ENCODE measurements at regions of chr6 and their contacts with region 1.

Region 1: DNA sequence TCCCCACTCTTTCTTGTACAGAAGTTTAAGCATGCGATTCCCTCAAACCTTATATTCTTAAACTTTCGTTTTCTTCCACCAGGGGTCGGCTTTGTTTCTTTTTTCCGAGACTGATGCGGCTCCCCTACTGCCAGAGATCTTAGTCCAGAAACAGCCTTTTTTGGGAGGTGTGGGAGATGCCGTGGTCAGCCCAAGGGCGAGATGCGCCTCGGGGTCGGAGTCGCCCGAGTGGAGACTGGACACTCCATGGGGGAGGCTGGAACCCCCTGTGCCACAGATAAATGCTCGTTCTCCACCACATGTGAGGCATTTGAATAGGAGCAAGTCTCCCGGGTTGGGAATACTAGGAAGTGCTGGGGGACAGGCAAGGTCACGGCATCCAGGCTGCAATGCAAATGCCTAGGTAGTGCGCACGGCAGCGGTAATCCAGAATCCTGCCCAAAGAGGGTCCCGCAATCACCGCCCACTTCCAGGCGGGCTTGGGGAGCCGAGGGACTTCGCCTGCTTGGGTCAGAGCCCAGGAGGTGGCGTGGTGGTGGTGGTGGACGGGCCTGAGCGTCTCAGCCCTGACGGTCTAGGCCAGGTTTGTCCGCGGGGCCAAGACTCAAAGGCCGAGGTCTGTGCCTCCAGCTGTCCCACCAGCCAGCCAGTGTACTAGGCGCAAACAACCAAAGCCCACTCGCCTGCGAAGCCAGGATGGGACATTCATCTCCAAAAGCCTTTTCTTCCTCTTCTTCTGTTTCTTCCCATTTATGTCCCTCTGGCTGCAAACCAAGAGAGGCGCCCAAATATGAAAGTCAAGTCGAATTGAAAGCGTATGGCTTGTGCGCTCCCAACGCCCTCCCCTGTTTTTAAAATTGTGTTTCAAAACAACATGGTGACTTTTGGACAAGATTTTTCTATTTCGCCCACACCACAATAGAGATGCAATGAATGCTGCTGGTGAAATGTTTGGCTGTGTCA is 39.3 kb upstream of the OSTM1 start:
- DNase-seq: peak; percentile 67
- H3K4me3 Mint-ChIP-seq: peak overlapping the region; percentile 73
- H3K27ac Mint-ChIP-seq: no peak overlapping the region
- H3K4me1 Mint-ChIP-seq: peaks cover 21% of the 10 kb centered on the region
- H3K27me3 Mint-ChIP-seq: peaks cover 11% of the 10 kb centered on the region
- CTCF ChIP-seq: peak; percentile 52

Region 2: GRCh38 chr6:108260809-108261569 is 147.2 kb after region 1 on chr6 and contains the start of gene SNX3:
- CTCF ChIA-PET with region 1: interaction called, 7 read pairs
- POLR2A ChIA-PET with region 1: interaction called, 3 read pairs
- intact Hi-C with region 1: loop called (anchors 2 kb)
- DNase-seq: peak; percentile 96
- H3K4me3 Mint-ChIP-seq: peak within 1 kb of the TSS; percentile 93
- H3K27ac Mint-ChIP-seq: peak within 1 kb of the TSS; percentile 89
- H3K4me1 Mint-ChIP-seq: peaks cover 7% of the 10 kb centered on the region
- H3K27me3 Mint-ChIP-seq: no peaks in the 10 kb centered on the region
- CTCF ChIP-seq: no peak
- total RNA-seq, gene SNX3: 114 and 138 TPM in 2 replicates

Region 3: GRCh38 chr6:108497883-108498282 is 384.0 kb after region 1 on chr6:
- CTCF ChIA-PET with region 1: interaction called, 43 read pairs
- POLR2A ChIA-PET with region 1: no interaction called
- intact Hi-C with region 1: loop called (anchors 1 kb)
- DNase-seq: peak; percentile 53
- H3K4me3 Mint-ChIP-seq: no peak overlapping the region
- H3K27ac Mint-ChIP-seq: no peak overlapping the region
- H3K4me1 Mint-ChIP-seq: no peaks in the 10 kb centered on the region
- H3K27me3 Mint-ChIP-seq: no peaks in the 10 kb centered on the region
- CTCF ChIP-seq: peak; percentile 32

Region 4: DNA sequence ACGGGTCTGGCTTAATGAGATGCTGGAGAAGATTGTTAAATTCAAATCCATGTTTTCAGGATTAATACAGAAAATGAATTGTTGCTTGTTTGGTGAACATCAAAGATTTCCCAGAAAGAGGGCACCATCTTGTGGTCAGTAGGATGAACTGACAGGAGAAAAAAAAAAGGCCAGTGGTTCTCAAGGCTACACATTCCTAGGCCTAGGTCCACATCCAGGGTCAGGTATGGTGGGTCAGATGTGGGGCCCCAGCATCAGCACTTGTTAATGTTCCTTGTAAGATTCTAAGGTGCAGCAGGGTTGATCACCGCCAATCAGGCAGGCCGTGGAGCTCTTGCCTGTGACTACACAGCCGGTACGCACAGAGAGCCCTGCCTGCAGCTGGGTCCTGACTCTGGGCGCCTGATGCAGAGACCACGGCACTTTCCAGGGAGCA is 412.9 kb after region 1 on chr6:
- CTCF ChIA-PET with region 1: interaction called, 11 read pairs
- POLR2A ChIA-PET with region 1: no interaction called
- intact Hi-C with region 1: loop called (anchors 1 kb)
- DNase-seq: peak; percentile 50
- H3K4me3 Mint-ChIP-seq: no peak overlapping the region
- H3K27ac Mint-ChIP-seq: no peak overlapping the region
- H3K4me1 Mint-ChIP-seq: no peaks in the 10 kb centered on the region
- H3K27me3 Mint-ChIP-seq: no peaks in the 10 kb centered on the region
- CTCF ChIP-seq: peak; percentile 71

Measured in MCF 10A (cell line).